ENCODE measurements at regions of chr1 and their contacts with region 1.

Region 1: GRCh38 chr1:87131809-87132283 is 196.8 kb upstream of the LMO4 start:
- DNase-seq: peak; percentile 87
- CTCF ChIP-seq: peak; percentile 99

Region 2: DNA sequence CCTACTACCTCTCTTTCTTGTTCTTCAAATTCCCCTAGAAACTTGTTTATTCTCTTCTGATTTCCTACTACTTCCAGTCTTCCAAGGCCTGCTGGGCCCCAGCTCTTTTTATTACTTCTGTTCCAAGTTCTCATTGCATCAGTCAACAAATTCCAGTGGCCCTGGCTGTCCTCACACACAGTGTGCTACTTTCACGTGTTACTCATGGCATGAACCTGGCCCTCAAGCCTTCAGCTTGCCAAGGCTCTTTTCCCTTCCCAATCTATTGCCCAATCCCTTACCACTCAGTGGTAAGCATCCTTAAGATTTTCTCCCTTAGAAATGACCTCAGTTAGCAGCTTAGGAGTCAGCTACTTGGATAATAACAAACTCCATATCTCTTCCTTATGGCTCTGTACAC is 810.3 kb after region 1 on chr1:
- in situ Hi-C with region 1: loop called (anchors 25 kb)
- DNase-seq: no peak
- CTCF ChIP-seq: no peak

Measured in GM13977 (cell line).